ENCODE measurements at regions of chr5 and their contacts with region 1.

Region 1: DNA sequence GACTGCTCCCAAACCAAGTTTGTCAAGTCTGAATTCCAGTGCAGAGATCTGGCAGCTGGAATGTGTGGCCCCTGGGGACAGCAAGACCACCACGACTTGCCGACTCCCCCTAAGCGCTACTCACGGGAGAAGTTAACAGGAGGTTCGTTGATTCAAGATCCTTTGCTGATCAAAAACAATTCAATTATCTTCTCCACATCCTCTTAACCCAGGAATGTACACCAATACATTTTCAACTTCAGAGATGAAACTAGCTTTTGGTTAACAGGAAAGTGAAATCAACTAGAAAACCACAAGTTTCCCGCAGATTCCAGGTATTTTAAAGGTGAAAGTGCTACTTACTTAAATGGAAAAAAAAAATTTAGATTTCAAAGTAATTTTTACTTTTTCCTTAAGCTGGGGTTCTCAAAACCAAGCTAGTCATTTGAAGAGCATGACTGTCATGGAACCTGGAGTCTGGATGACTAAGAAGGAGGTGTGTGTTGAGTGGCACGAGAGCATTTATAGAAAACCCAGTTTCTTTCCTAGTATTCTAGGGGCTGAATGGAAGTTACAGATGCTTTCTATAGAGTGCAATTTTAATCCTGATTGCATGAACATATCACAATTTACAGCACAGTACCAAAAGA is 257.5 kb upstream of the PANK3 start:
- DNase-seq: no peak
- H3K4me3 Mint-ChIP-seq: peak overlapping the region; percentile 28
- H3K27ac Mint-ChIP-seq: peak overlapping the region; percentile 23
- H3K4me1 Mint-ChIP-seq: peaks cover 15% of the 10 kb centered on the region
- H3K27me3 Mint-ChIP-seq: peaks cover 7% of the 10 kb centered on the region

Region 2: GRCh38 chr5:168227973-168228615 is 608.6 kb before region 1 on chr5:
- intact Hi-C with region 1: loop called (anchors 2 kb)
- DNase-seq: peak; percentile 14
- H3K4me3 Mint-ChIP-seq: no peak overlapping the region
- H3K27ac Mint-ChIP-seq: no peak overlapping the region
- H3K4me1 Mint-ChIP-seq: peaks cover 25% of the 10 kb centered on the region
- H3K27me3 Mint-ChIP-seq: peaks cover 34% of the 10 kb centered on the region

Region 3: GRCh38 chr5:168793841-168794837 is 42.6 kb before region 1 on chr5:
- intact Hi-C with region 1: loop called (anchors 1 kb)
- DNase-seq: no peak
- H3K4me3 Mint-ChIP-seq: no peak overlapping the region
- H3K27ac Mint-ChIP-seq: peak overlapping the region; percentile 72
- H3K4me1 Mint-ChIP-seq: peaks cover 41% of the 10 kb centered on the region
- H3K27me3 Mint-ChIP-seq: no peaks in the 10 kb centered on the region

Region 4: DNA sequence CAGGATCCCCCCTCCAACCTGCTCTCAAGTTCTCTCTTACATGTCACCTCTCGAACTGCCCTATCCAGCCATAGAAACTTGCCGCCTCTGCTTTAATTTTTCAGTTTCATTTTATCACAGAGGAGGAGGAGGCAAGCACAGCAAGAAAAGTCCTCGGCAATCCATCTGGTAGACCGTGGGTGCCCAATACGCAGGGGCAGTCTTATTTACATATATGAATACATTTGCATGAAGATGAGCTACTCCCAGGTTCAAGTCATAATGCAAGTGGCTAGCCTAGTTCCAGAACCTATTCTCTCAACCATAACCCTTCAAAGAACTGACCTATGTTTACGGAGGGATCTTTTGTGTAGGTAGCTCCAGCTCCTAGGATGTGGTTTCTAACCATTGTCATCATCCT is 34.4 kb before region 1 on chr5:
- intact Hi-C with region 1: loop called (anchors 1 kb)
- DNase-seq: no peak
- H3K4me3 Mint-ChIP-seq: peak overlapping the region; percentile 70
- H3K27ac Mint-ChIP-seq: peak overlapping the region; percentile 79
- H3K4me1 Mint-ChIP-seq: peaks cover 32% of the 10 kb centered on the region
- H3K27me3 Mint-ChIP-seq: peaks cover 3% of the 10 kb centered on the region

Region 5: DNA sequence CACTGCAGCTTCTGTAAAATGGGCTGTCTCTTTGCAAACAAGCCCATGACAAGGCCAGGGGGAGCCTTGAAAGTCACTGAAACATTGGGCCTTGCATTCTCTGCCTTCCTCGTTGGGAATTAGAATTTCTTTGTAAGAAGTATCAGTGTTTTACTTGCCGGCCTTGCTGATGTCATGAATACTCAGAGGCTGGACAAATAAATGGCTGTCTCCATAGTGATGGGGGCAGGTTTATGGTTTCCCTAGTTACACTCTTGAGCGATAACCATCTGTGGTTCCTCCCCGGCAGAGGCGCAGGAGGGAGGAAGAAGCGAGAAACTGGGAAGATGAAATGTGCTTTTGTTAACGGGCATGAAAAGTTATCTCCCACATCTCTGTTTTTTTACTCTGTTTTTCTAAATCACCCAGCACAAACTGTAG is 15.2 kb after region 1 on chr5:
- intact Hi-C with region 1: loop called (anchors 1 kb)
- DNase-seq: peak; percentile 26
- H3K4me3 Mint-ChIP-seq: peak overlapping the region; percentile 54
- H3K27ac Mint-ChIP-seq: peak overlapping the region; percentile 77
- H3K4me1 Mint-ChIP-seq: peaks cover 20% of the 10 kb centered on the region
- H3K27me3 Mint-ChIP-seq: peaks cover 14% of the 10 kb centered on the region